GM10248 (cell line): ENCODE measurements at regions of chr1 and their contacts with region 1.

Region 1: DNA sequence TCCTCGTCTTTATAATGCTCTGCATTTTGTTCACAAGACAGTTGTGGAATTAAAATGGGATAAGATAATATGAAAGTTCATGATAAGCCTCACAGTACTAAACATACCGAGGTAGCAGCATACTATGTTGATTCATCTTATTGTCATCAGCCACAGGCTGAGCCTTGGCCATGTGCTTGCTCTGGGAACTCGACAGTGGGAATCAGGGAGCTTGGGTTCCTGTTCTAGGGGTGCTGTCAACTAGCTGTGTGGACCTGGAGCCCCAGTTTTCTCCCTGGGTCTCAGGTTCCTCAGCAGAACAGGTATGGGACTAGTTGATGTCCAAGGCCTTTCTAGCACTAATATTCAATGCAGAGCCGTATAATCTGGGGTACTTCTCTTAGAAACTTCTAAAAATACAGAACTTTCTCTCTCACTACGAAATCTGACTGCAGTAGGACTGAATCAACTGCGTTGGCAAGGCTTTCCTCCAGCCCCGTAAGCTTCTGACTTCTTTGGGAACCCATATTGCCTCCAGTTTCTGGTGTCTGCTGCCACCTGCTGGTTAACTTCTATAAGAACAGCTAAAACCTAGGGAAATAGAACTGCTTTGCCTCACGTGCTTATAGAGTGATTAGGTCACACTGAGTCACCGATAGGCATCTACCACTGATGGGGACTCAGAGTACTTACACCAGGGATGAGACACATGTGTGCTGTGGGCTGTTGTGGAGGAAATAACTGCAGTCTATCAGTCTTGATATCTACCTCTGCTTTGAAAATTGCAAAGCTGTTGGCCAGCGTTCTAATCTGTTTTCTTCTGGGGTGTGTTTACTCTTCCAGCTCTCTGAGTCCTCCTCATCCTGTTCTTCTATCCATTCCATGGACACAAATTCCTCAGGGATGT is 110.9 kb downstream of the RGL1 start:
- DNase-seq: peak; percentile 59
- CTCF ChIP-seq: peak; percentile 65

Region 2: GRCh38 chr1:183609313-183609712 is 306.6 kb before region 1 on chr1:
- CTCF ChIA-PET with region 1: interaction called, 10 read pairs
- POLR2A ChIA-PET with region 1: no interaction called
- DNase-seq: peak; percentile 48
- CTCF ChIP-seq: peak; percentile 72

Region 3: DNA sequence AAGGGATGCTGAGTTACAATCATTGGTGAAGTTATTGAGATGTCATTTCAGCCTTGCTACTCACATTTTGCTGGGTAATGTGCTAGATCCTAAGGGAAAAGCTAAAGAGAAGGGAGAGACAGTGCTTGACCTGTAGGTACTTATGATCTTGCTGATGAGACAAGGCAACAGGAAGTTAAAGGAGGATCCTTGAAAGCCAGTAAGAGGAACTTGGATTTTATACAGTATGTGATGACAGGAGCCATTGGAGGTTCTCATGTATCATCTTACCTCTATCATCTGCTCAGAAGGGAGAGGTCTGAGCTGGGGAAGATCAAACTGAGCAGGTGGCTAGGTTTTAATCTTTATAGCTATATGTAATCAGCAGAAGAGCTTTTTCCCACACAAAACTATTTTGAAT is 269.1 kb before region 1 on chr1:
- CTCF ChIA-PET with region 1: interaction called, 232 read pairs
- POLR2A ChIA-PET with region 1: interaction called, 3 read pairs
- DNase-seq: no peak
- CTCF ChIP-seq: no peak

Region 4: GRCh38 chr1:183685112-183685713 is 230.7 kb before region 1 on chr1:
- CTCF ChIA-PET with region 1: interaction called, 33 read pairs
- POLR2A ChIA-PET with region 1: no interaction called
- DNase-seq: peak; percentile 64
- CTCF ChIP-seq: peak; percentile 72

Region 5: GRCh38 chr1:183723571-183723970 is 192.3 kb before region 1 on chr1:
- CTCF ChIA-PET with region 1: no interaction called
- POLR2A ChIA-PET with region 1: no interaction called
- DNase-seq: no peak
- CTCF ChIP-seq: no peak

Region 6: DNA sequence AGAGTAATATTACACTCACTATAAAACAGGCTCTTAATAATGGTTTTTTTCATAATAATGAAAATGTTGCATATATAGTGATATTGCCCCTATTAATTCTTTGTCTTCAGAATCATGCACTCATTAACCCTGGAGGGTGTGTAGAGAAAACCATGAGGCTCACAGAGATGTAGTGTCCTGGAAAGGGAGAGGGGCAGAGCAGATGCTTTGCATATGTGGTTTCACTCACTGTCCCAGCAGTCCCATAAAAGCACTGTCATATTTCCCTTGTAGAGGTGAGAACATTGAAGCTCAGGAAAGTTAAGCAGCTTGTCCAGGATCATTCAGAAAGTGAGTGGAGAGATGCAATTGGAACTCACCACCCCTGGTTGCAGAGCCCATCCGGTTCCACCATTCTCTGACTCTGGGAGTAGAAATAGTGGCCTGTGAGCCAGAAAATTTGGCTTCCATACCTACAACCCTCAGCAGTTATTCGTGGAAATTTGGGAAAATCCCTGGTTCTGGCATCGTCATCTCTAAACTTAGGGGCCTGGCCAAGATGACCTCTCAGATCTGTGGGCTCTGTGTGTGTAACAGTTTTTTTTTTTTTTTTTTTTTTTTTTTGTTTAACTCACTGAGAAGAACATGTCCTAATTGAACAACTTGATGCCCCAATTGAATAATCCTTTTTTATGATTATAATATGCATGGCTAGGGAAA is 24.6 kb before region 1 on chr1:
- CTCF ChIA-PET with region 1: interaction called, 58 read pairs
- POLR2A ChIA-PET with region 1: no interaction called
- DNase-seq: no peak
- CTCF ChIP-seq: no peak

Region 7: GRCh38 chr1:183942933-183943693 is 27.2 kb after region 1 on chr1:
- CTCF ChIA-PET with region 1: interaction called, 28 read pairs
- POLR2A ChIA-PET with region 1: no interaction called
- DNase-seq: no peak
- CTCF ChIP-seq: no peak

Region 8: DNA sequence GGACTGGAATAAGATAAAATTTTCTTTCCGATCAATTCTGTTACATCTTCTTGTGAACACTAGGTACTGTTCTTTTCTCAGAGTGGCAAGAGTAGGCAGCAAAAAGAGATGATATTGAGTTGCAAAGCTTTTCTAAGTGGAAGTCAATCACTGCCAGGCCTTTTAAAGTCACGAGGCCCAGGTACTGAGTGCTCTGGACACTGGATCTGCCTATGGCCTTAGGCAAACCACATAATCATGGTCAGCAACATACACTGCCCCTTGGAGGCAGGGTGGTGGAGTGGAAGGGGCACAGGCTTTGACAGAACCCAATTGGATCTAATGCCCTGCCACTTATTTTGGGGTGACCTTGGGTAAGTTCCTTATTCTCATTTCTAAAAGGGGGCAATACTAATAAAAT is 177.2 kb after region 1 on chr1:
- CTCF ChIA-PET with region 1: no interaction called
- POLR2A ChIA-PET with region 1: no interaction called
- DNase-seq: no peak
- CTCF ChIP-seq: no peak

Region 9: GRCh38 chr1:184545595-184545994 is 629.7 kb after region 1 on chr1:
- CTCF ChIA-PET with region 1: no interaction called
- POLR2A ChIA-PET with region 1: no interaction called
- DNase-seq: no peak
- CTCF ChIP-seq: no peak